ENCODE measurements at regions of chr17 and their contacts with region 1.

Region 1: DNA sequence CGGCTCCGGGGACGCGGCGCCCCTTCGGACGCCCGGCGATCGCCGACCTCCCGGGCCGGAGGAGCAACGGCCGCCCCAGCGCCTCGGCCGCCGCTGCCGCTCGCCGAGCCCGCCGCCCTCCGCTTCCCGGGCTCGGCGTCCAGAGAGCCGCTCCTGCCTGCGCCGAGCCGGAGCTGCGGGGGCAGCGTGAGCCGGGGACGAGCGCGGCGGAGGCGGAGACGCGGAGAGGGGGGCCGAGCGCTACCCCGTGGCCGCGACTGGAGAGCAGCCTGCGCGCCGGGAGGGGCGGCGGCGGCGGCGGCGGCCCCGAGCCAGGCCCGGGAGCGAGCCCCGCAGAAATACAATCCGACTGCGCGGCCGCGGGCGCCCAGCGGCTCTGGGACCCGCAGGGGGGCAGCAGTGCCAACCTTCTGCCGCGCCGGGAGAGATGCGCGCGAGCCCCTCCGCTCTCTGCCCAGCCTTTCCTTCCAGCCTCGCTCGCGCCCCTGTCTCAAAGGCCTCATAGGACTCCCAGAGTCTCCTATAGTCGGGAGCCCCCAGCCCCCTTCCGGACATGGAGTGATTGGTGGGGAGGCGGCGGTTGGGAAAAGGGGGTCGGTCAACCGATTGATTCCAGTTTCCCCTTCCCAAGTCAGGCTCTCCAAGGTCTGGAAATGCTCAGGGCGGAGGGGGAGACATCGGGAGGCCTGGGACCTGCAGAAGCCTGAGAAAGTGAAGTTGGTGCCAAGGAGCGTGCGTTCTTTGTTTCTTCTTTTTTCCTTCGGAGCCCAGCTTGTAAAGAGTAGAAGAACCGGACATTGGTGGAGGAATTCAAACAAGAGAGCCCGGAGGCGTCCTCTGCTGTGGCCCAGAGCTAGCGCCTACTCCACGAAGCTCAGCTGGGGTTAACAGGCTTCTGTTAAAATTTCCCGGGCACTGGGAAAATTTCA is 1.1 kb upstream of the SDK2 start:
- DNase-seq: peak in 3 of 5 donors; percentile 17 to 33 (median 29)
- H3K4me3 ChIP-seq: no peak overlapping the region
- H3K4me3 Mint-ChIP-seq: peak overlapping the region; percentile 20 to 69 (median 55)
- H3K27ac ChIP-seq: no peak overlapping the region
- H3K27ac Mint-ChIP-seq: no peak overlapping the region
- H3K4me1 ChIP-seq: peaks cover 5% of the 10 kb centered on the region
- H3K4me1 Mint-ChIP-seq: peaks cover 7 to 20% (median 15%) of the 10 kb centered on the region in 4 donors
- H3K27me3 ChIP-seq: peaks cover 11% of the 10 kb centered on the region
- H3K27me3 Mint-ChIP-seq: peaks cover 15 to 27% of the 10 kb centered on the region in 2 donors

Region 2: GRCh38 chr17:73203135-73203787 is 442.1 kb before region 1 on chr17:
- CTCF ChIA-PET with region 1: no interaction called
- POLR2A ChIA-PET with region 1: no interaction called
- intact Hi-C with region 1: no loop called
- DNase-seq: peak in 2 of 5 donors; percentile 27 to 30
- H3K4me3 ChIP-seq: no peak overlapping the region
- H3K4me3 Mint-ChIP-seq: peak overlapping the region in 5 of 8 donors; percentile 43 to 67 (median 49)
- H3K27ac ChIP-seq: peak overlapping the region; percentile 0
- H3K27ac Mint-ChIP-seq: peak overlapping the region; percentile 76 to 93 (median 87)
- H3K4me1 ChIP-seq: peaks cover 16% of the 10 kb centered on the region
- H3K4me1 Mint-ChIP-seq: peaks cover 17 to 38% (median 30%) of the 10 kb centered on the region in 4 donors
- H3K27me3 ChIP-seq: no peaks in the 10 kb centered on the region
- H3K27me3 Mint-ChIP-seq: no peaks in the 10 kb centered on the region

Region 3: DNA sequence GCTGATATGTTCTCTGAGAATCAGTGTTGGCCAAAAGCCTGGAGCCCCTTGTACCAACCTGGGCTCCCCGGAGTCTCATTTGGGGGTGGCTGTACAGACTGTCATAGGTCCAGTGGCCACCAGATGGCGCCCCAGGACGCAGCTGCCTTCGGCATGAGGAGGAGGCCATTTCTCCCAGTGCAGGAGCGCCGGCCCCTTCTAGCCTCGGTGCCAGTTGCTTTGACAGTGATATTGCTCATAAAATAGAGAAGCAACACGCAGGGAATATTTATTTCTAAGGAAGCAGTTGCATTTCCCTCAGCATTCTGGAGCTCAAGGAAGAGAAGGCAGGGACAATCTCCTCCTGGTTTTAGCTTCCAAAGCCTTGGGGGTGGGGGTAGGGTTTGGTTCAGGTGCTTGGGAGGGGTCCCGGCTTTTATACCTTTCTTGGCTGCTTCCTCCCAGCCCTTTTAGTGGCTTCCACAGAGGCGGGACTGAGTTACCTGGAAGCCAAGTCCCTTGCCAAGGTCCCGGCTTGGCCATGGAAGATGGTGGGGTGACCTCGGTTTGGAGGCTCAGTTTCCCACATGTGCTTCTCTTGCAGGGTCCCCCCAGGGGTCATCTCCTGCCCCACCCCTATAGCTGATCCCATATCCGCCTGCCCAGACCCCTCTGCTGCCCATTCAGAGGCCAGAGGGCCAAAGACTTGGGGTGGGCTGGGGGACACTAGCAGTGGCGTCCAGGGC is 215.7 kb before region 1 on chr17:
- CTCF ChIA-PET with region 1: interaction called, 11 read pairs
- POLR2A ChIA-PET with region 1: no interaction called
- intact Hi-C with region 1: loop called (anchors 1 kb)
- DNase-seq: peak; percentile 72 to 78 (median 74)
- H3K4me3 ChIP-seq: no peak overlapping the region
- H3K4me3 Mint-ChIP-seq: peak overlapping the region in 4 of 8 donors; percentile 40 to 67 (median 52)
- H3K27ac ChIP-seq: no peak overlapping the region
- H3K27ac Mint-ChIP-seq: peak overlapping the region in 1 of 7 donors; percentile 77
- H3K4me1 ChIP-seq: peaks cover 3% of the 10 kb centered on the region
- H3K4me1 Mint-ChIP-seq: peaks cover 3 to 13% (median 6%) of the 10 kb centered on the region in 4 donors
- H3K27me3 ChIP-seq: no peaks in the 10 kb centered on the region
- H3K27me3 Mint-ChIP-seq: no peaks in the 10 kb centered on the region

Region 4: GRCh38 chr17:73610331-73610911 is 34.9 kb before region 1 on chr17:
- CTCF ChIA-PET with region 1: no interaction called
- POLR2A ChIA-PET with region 1: no interaction called
- intact Hi-C with region 1: no loop called
- DNase-seq: no peak
- H3K4me3 ChIP-seq: no peak overlapping the region
- H3K4me3 Mint-ChIP-seq: no peak overlapping the region
- H3K27ac ChIP-seq: no peak overlapping the region
- H3K27ac Mint-ChIP-seq: peak overlapping the region in 1 of 7 donors; percentile 6
- H3K4me1 ChIP-seq: no peaks in the 10 kb centered on the region
- H3K4me1 Mint-ChIP-seq: no peaks in the 10 kb centered on the region
- H3K27me3 ChIP-seq: no peaks in the 10 kb centered on the region
- H3K27me3 Mint-ChIP-seq: peaks cover 0 to 6% of the 10 kb centered on the region in 2 donors

Region 5: DNA sequence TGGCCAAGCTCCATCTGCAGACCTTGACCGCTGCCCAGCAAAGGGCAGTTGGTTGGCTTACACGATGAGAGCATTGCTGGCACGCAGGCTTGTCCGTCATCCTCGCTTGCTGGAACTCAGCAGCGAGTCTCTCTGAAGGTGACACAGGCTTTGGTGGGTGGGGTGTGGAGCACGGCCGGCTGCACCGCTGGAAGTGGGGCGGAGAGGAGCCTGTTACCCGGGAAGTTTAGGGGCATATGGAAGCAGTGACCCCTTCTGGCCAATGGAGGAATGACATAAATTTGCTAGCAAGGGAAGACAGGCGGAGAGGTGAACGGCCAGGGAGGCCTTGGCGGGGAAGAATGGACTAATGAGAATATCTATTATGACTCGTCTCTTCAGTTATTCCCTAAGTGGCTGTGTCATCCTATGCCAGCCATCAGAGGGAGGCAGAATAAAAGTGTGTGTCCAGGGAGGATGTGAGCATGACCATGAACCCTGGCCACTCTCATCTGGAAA is 64.8 kb after region 1 on chr17:
- CTCF ChIA-PET with region 1: interaction called, 12 read pairs
- POLR2A ChIA-PET with region 1: no interaction called
- intact Hi-C with region 1: no loop called
- DNase-seq: peak in 4 of 5 donors; percentile 56 to 66 (median 62)
- H3K4me3 ChIP-seq: no peak overlapping the region
- H3K4me3 Mint-ChIP-seq: no peak overlapping the region
- H3K27ac ChIP-seq: no peak overlapping the region
- H3K27ac Mint-ChIP-seq: peak overlapping the region in 1 of 7 donors; percentile 66
- H3K4me1 ChIP-seq: peaks cover 4% of the 10 kb centered on the region
- H3K4me1 Mint-ChIP-seq: peaks cover 7 to 11% (median 8%) of the 10 kb centered on the region in 4 donors
- H3K27me3 ChIP-seq: no peaks in the 10 kb centered on the region
- H3K27me3 Mint-ChIP-seq: peaks cover 6% of the 10 kb centered on the region in 2 donors

Region 6: GRCh38 chr17:73901661-73902415 is 256.5 kb after region 1 on chr17:
- CTCF ChIA-PET with region 1: no interaction called
- POLR2A ChIA-PET with region 1: no interaction called
- intact Hi-C with region 1: loop called (anchors 5 kb)
- DNase-seq: peak in 1 of 5 donors; percentile 6
- H3K4me3 ChIP-seq: peak overlapping the region in 1 of 2 donors; percentile 29
- H3K4me3 Mint-ChIP-seq: peak overlapping the region; percentile 85 to 95 (median 90)
- H3K27ac ChIP-seq: no peak overlapping the region
- H3K27ac Mint-ChIP-seq: peak overlapping the region in 4 of 7 donors; percentile 68 to 84 (median 77)
- H3K4me1 ChIP-seq: peaks cover 6% of the 10 kb centered on the region
- H3K4me1 Mint-ChIP-seq: peaks cover 3 to 16% (median 8%) of the 10 kb centered on the region in 4 donors
- H3K27me3 ChIP-seq: no peaks in the 10 kb centered on the region
- H3K27me3 Mint-ChIP-seq: peaks cover 22 to 28% of the 10 kb centered on the region in 2 donors

Region 7: DNA sequence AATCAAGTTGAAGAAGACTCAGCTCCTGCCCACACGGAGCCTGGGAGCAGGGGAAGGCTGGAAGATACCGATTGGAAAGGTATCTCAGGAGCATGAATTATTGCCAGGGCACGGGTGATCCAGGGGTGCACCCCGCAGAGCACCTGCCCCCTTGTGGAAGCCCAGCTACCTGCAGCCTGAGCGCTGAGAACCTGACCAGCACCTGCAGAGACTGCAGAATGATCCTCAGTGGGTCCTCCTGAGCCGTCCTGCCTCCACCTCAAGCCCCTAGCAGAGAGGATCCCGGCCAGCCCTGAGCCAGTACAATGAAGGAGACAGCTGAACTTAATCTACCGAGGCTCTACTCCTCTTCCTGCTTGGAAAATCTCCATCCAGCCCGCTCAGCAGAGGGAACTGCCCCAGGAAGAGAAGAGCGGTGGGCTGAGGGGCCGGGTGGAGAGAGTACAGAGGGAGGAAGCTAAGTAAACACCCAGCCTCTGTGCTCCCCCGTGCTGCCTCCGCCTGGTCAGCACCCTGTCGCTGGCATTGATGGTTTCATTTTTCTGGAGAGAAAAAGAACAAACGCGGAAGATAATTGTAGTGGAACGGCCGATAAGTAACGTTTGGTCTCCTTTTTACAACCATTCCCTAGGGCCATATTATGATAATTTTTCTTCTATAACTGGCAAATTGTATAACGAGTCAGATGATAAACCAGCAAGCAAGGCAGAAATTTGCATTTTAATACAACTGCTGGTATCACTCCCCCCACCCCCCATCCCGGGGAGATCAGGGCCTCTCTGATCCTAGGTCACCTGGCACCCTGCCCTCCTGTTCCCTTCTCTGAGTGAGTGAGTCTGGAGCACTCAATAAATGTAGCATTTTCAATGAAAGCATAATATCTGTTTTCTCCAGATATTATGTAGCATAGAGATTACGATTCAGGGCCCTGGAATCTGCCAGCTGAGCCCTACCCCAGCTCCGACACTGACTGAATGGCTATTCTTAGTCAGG is 353.6 kb after region 1 on chr17:
- CTCF ChIA-PET with region 1: interaction called, 3 read pairs
- POLR2A ChIA-PET with region 1: no interaction called
- intact Hi-C with region 1: loop called (anchors 5 kb)
- DNase-seq: peak in 4 of 5 donors; percentile 45 to 51 (median 47)
- H3K4me3 ChIP-seq: no peak overlapping the region
- H3K4me3 Mint-ChIP-seq: no peak overlapping the region
- H3K27ac ChIP-seq: no peak overlapping the region
- H3K27ac Mint-ChIP-seq: peak overlapping the region in 1 of 7 donors; percentile 8
- H3K4me1 ChIP-seq: no peaks in the 10 kb centered on the region
- H3K4me1 Mint-ChIP-seq: peaks cover 0 to 7% (median 3%) of the 10 kb centered on the region in 4 donors
- H3K27me3 ChIP-seq: peaks cover under 1% of the 10 kb centered on the region
- H3K27me3 Mint-ChIP-seq: peaks cover 6 to 21% of the 10 kb centered on the region in 2 donors

Measured in CD4-positive, alpha-beta memory T cell (primary cell).